CD14-positive monocyte (primary cell): ENCODE measurements at regions of chr9 and their contacts with region 1.

Region 1: GRCh38 chr9:99057665-99058625 is 47.0 kb upstream of the TGFBR1 start:
- DNase-seq: peak; percentile 63 to 84 (median 73)
- H3K4me3 ChIP-seq: peak overlapping the region in 1 of 3 experiments; percentile 60
- H3K4me3 Mint-ChIP-seq: peak overlapping the region; percentile 59 to 81
- H3K27ac ChIP-seq: peak overlapping the region; percentile 56 to 88
- H3K27ac Mint-ChIP-seq: peak overlapping the region; percentile 96 to 99 (median 98)
- H3K4me1 ChIP-seq: peaks cover 60 to 61% of the 10 kb centered on the region in 2 donors
- H3K4me1 Mint-ChIP-seq: peaks cover 59% of the 10 kb centered on the region
- H3K27me3 ChIP-seq: peaks cover 25 to 30% of the 10 kb centered on the region in 2 donors
- H3K27me3 Mint-ChIP-seq: peaks cover 29 to 39% (median 34%) of the 10 kb centered on the region in 3 donors
- CTCF ChIP-seq: no peak

Region 2: DNA sequence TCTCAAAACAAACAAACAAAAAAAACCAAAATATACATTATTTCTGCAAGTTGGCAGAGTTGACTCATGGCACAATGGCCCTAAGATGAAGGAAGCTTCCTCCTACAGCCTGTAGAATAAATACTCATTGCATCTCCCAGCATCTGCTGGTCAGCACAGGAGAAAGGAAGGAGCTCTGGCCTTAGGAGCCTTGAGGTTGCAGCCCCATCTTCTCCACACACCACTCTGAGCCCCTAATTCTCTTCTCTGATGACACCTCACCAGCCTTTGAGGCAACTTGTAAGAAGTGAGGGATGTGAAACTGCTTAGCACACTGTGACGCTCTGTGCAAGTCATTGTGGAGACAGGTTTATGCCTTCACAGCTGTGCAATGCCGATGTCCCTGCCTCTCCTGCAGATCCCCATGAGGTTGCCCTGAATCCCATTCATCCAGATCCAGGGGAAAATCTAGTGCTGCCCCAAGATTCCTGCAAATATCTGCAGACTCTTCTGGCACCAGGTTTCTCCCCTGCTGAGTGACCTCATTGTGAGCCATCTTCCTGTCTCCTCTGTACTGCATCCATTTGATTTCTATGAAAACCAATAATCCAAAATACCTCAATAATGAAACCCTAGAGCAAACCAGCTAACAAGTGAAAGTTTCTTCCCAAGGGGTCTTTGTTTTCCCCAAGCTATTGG is 18.3 kb before region 1 on chr9:
- intact Hi-C with region 1: loop called in 1 of 2 experiments (anchors 2 kb)
- DNase-seq: peak; percentile 76 to 85 (median 80)
- H3K4me3 ChIP-seq: no peak overlapping the region
- H3K4me3 Mint-ChIP-seq: peak overlapping the region; percentile 37 to 67
- H3K27ac ChIP-seq: peak overlapping the region in 1 of 2 donors; percentile 76
- H3K27ac Mint-ChIP-seq: peak overlapping the region; percentile 87 to 94 (median 91)
- H3K4me1 ChIP-seq: peaks cover 34 to 38% of the 10 kb centered on the region in 2 donors
- H3K4me1 Mint-ChIP-seq: peaks cover 46% of the 10 kb centered on the region
- H3K27me3 ChIP-seq: peaks cover 40 to 53% of the 10 kb centered on the region in 2 donors
- H3K27me3 Mint-ChIP-seq: peaks cover 59 to 61% (median 59%) of the 10 kb centered on the region in 3 donors
- CTCF ChIP-seq: no peak

Region 3: DNA sequence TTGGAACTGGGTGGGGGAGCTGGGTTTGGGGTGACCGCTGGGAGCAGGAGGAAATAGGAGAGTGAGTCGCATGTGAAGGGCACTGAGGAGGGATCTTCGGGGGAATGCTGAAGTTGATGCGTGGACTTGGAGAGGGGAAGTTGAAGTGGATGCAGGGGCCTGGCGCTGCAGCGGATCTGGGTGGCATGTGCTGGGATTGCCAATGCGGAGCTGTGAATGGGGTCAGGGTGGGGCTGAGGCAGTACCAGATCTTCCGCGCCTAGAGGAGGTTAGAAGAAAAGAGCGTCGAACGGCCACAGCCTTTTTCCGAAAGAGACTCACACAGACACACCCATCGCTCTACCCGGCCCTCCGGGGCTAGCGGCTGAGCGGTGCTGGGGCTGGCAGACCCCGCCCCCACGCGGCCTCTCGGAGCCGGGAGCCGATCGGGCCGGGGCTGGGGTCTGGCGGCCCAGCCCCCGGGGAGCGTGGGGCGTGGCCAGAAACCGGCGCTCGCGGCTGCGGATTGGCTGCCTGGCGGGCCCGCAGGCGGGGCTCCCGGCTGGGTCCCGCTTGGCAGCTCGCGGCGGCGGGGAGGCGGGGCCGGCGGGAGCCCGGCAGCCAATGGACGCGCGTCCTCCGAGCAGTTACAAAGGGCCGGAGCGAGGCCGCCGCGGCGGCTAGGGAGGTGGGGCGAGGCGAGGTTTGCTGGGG is 46.7 kb after region 1 on chr9 and contains the start of gene TGFBR1:
- intact Hi-C with region 1: loop called (anchors 5 kb)
- DNase-seq: peak; percentile 82 to 88 (median 83)
- H3K4me3 ChIP-seq: peak within 1 kb of the TSS; percentile 74 to 96 (median 85)
- H3K4me3 Mint-ChIP-seq: peak within 1 kb of the TSS; percentile 96 to 99
- H3K27ac ChIP-seq: peak within 1 kb of the TSS; percentile 68 to 94
- H3K27ac Mint-ChIP-seq: peak within 1 kb of the TSS; percentile 87 to 98 (median 95)
- H3K4me1 ChIP-seq: peaks cover 47 to 52% of the 10 kb centered on the region in 2 donors
- H3K4me1 Mint-ChIP-seq: peaks cover 50% of the 10 kb centered on the region
- H3K27me3 ChIP-seq: no peaks in the 10 kb centered on the region
- H3K27me3 Mint-ChIP-seq: peaks cover 0 to 5% (median 0%) of the 10 kb centered on the region in 3 donors
- CTCF ChIP-seq: no peak
- polyA plus RNA-seq, gene TGFBR1: 10.7 to 26.8 (median 25.0) TPM